ENCODE measurements at regions of chr10 and their contacts with region 1.

Region 1: DNA sequence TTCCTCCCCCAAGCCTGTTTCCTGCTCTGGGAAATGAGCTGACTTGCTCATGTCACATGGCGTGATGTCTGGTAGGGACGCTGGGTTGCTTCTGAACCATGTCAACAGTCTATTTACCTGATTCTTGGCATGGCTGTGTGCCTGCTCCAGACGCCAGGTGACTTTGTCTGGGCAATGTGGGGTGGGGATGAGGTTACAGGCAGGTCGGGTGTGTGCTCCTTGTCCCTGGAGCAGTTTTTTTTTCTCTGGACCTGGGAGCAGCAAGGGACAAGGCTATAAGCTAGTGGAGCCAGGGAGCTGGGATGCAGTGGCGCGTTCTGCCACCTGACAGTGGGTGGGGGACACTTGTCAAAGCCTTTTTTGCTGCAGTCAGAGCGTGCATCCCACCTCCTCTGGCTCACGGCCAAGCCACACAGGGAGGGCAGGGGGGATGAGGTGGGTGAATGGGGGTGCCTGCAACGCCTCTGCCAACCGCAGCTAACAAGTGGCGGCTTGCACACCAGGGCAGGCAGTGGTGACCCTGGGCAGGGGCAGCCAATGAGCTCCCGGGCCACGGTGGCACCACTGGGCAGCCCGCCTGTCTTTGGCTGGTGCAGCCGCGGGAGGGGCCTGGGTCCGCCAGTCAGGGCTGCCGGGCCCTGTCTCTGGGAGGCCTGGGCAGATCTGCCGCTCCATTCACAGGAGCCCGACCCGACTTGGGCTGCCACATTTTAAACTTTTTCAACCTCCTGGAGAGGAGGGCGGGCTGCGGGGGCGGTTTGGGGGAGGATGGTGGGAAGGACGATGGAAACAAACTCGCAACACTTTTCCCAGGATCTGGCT is 22.9 kb downstream of the DNAJB12 start:
- DNase-seq: peak; percentile 74 to 82 (median 77)
- H3K4me3 ChIP-seq: no peak overlapping the region
- H3K27ac ChIP-seq: peak overlapping the region; percentile 77 to 99
- H3K4me1 ChIP-seq: peaks cover 53% of the 10 kb centered on the region
- H3K27me3 ChIP-seq: no peaks in the 10 kb centered on the region
- CTCF ChIP-seq: peak; percentile 12 to 27 (median 16)
- EP300 ChIP-seq: no peak
- POLR2A ChIP-seq: no peak

Region 2: DNA sequence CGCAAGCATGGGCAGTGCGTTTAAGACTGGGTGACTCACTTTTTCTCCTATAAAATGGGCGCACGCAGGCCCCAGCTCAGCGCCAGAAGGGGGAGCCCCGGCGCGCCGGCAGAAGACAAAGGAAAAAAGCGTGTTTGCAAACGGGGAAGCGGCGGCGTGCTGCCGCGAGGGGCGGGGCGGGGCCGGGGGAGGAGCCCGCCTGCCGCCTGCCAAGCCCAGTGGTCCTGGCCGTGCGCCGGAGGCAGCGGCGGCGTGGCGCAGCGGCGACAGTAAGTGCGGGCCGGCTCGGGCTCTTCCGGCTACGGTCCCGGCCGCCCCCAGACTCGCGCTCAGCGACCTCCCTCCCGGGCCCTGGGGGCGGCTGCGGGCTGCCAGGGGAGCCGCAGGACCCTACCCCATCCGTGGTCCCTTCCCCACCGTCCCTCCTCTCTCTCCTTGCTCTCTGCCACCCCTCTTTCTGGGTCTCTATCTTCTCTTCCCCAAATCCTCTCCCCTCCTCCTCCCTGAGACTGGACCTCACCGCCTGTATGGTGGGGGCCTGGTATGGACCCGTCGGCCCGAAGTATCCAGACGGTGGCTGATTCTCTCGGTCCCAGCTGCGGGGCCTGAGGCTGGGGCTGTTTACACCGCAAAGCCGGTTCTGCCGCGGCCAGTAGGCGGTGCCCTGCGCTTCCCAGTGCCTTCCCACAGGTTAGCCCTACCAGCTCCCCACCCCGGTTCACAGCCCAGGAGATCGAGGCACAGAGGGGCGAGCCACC is 1012.6 kb before region 1 on chr10 and contains the start of gene SLC29A3:
- intact Hi-C with region 1: loop called in 2 of 4 experiments (anchors 5 to 10 kb)
- DNase-seq: peak; percentile 80 to 88 (median 84)
- H3K4me3 ChIP-seq: peak within 1 kb of the TSS; percentile 76
- H3K27ac ChIP-seq: peak within 1 kb of the TSS; percentile 83 to 91
- H3K4me1 ChIP-seq: peaks cover 10% of the 10 kb centered on the region
- H3K27me3 ChIP-seq: no peaks in the 10 kb centered on the region
- CTCF ChIP-seq: peak; percentile 52 to 84 (median 73)
- EP300 ChIP-seq: no peak
- POLR2A ChIP-seq: peak; percentile 74
- total RNA-seq, gene SLC29A3: 10.1 to 18.3 (median 15.5) TPM

Region 3: GRCh38 chr10:71957546-71958275 is 374.1 kb before region 1 on chr10:
- intact Hi-C with region 1: loop called in 3 of 4 experiments (anchors 5 to 10 kb)
- DNase-seq: no peak
- H3K4me3 ChIP-seq: no peak overlapping the region
- H3K27ac ChIP-seq: no peak overlapping the region
- H3K4me1 ChIP-seq: no peaks in the 10 kb centered on the region
- H3K27me3 ChIP-seq: no peaks in the 10 kb centered on the region
- CTCF ChIP-seq: no peak
- EP300 ChIP-seq: no peak
- POLR2A ChIP-seq: no peak

Region 4: DNA sequence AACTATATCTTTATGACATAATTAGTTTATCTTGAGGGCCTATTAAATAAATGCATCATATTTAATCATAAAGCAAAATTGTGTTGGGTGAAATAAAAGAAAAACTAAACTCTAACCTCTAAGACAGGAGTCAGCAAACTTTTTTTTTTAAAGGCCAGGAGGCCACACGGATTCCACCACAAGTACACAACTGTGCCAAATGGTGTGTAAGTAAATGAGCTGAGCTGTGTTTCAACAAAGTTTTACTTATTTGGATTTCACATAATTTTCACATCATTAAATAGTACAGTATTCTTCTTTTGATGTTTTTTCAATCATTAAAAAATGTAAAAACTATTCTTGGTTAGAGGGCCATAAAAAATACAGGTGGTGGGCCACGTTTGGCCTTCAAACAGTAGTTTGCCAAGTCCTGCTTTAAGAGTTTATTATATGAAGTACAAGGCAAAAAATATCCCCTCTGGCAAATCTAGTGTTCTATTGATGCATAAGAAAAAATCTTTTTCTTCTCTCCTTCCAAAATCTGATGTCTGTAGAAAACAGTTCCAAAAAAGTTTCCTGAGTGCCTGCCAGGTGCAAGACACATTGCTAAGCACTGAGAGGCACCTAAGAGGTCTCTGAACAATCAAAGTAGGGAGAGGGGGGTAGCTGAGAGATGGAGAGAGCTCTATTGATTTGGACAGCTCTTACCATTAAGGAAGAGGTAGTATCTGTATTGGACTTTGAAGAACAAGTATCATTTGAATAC is 216.9 kb before region 1 on chr10:
- intact Hi-C with region 1: loop called in 1 of 4 experiments (anchors 5 kb)
- DNase-seq: no peak
- H3K4me3 ChIP-seq: no peak overlapping the region
- H3K27ac ChIP-seq: peak overlapping the region in 1 of 2 donors; percentile 21
- H3K4me1 ChIP-seq: peaks cover 3% of the 10 kb centered on the region
- H3K27me3 ChIP-seq: no peaks in the 10 kb centered on the region
- CTCF ChIP-seq: no peak
- EP300 ChIP-seq: no peak
- POLR2A ChIP-seq: no peak

Region 5: DNA sequence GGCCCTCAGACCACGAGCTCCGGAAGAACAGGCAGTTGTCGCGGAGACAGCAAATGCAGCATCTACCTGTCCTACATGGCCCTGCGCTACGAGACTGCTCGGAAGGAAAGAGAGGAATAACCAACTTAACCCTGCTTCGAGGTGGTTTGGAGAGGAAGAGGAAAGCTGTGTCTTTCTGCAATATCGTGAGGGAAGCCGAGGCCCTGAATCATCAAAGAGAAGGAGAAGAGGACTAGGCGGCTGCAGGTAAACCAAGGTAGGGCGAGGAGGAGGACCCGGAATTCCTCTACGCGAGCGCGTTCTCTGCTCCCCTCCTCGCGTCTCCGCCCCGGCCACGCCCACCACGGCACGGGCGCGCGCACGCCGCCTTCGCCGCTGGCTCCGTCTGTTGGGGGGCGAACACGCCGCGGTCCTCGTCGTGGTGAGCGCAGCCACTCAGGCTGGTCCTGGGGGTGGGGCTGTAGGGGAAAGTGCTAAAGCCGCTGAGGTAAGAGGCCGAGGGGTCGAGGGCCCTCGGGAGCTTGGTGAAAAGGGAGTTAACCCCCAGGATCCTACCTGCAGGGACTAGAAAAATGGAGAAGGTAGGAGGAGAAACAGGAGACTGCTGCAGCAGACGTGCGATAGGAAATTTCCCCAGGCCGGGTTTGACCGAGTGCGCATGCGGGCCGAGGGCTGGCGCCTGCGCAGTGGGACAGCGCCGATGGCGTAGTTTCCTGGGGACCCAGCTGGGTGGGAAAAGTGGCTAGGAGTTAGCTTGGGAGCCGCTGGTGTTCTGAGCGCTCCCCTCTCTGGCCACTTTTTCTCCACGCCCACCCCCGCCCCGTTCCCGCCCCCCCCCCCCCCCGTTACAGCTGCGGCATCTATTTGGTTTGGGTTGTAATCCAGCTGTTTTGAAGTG is 115.9 kb before region 1 on chr10 and contains the starts of genes ANAPC16 and ASCC1:
- intact Hi-C with region 1: loop called in 2 of 4 experiments (anchors 5 kb)
- DNase-seq: peak; percentile 92 to 96 (median 94)
- H3K4me3 ChIP-seq: peak within 1 kb of the TSS; percentile 77
- H3K27ac ChIP-seq: peak within 1 kb of the TSS; percentile 92 to 99
- H3K4me1 ChIP-seq: peaks cover 9% of the 10 kb centered on the region
- H3K27me3 ChIP-seq: no peaks in the 10 kb centered on the region
- CTCF ChIP-seq: peak in 2 of 3 donors; percentile 7 to 47
- EP300 ChIP-seq: peak; percentile 41
- POLR2A ChIP-seq: peak; percentile 99
- total RNA-seq, gene ANAPC16: 71.6 to 136 (median 112) TPM
- total RNA-seq, gene ASCC1: 21.6 to 53.5 (median 31.1) TPM

Region 6: DNA sequence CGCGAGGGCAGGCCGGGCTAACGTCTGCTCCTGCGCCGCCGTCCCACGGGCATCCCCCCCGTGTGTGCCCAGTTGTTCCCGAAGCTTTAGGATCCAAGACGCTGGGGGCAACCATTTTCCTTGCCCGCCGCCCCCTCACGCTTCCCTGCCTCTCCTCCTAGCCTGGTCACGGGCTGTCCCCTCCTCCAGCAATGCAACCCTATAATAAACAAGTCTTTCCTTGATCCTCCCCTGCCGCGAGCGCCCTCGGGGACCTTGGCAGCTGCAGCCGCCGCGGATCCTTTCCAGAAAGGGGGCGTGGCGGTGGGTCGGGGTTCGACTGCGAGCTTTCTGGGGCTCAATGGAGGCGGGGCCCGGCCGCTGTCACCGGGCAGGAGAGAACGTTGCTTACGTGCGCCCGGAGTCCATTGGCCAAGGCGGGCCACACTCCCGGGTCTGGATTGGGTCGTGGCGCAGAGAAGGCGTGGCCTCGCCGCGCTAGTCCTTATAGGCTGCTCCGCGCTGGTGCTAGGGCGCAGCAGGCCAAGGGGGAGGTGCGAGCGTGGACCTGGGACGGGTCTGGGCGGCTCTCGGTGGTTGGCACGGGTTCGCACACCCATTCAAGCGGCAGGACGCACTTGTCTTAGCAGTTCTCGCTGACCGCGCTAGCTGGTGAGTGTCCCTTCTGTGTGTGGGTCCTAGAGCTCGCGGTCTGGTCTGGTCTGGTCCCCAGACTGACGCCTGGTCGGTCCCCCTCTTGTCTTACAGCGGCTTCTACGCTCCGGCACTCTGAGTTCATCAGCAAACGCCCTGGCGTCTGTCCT is 58.2 kb before region 1 on chr10 and contains the start of gene DDIT4:
- intact Hi-C with region 1: loop called in 3 of 4 experiments (anchors 2 to 10 kb)
- DNase-seq: peak; percentile 100
- H3K4me3 ChIP-seq: peak within 1 kb of the TSS; percentile 77
- H3K27ac ChIP-seq: peak within 1 kb of the TSS; percentile 89 to 95
- H3K4me1 ChIP-seq: peaks cover 6% of the 10 kb centered on the region
- H3K27me3 ChIP-seq: no peaks in the 10 kb centered on the region
- CTCF ChIP-seq: peak in 1 of 3 donors; percentile 29
- EP300 ChIP-seq: peak; percentile 79
- POLR2A ChIP-seq: peak; percentile 100
- total RNA-seq, gene DDIT4: 229 to 1,952 (median 524) TPM

Region 7: DNA sequence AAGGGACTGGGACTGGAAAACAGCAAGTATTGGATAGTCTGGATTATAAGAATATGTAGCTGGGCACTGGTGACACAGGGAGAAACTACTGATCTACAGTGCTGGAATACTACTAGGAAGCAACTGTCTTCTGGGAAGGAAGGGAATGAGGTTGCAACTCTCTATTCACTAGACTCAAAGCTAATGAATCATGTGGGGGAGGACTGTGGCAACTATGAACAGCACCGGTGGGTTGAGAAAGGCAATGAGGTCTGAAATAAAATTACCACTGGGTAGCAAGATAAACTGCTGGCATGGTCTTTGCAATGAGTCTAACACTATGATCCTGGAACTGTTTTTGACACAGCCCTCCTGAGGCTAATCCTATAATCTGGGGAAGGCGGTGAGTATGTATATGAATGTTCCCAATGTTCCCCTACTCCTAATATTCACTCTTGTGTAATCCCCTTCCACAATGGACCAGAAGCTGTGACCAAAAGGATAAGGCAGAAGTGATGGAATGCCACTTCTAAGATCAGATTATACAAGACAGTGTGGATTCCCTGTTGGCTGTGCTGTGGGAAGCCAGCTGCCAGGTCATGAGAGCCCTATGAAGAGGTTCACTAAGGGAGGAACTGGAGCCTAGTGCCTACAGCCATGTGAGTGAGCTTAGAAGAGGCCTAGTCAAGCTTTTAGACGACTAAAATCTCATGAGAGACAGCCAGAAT is 124.2 kb after region 1 on chr10:
- intact Hi-C with region 1: no loop called
- DNase-seq: no peak
- H3K4me3 ChIP-seq: no peak overlapping the region
- H3K27ac ChIP-seq: no peak overlapping the region
- H3K4me1 ChIP-seq: no peaks in the 10 kb centered on the region
- H3K27me3 ChIP-seq: no peaks in the 10 kb centered on the region
- CTCF ChIP-seq: no peak
- EP300 ChIP-seq: no peak
- POLR2A ChIP-seq: no peak